ENCODE measurements at regions of chr10 and their contacts with region 1.

Region 1: DNA sequence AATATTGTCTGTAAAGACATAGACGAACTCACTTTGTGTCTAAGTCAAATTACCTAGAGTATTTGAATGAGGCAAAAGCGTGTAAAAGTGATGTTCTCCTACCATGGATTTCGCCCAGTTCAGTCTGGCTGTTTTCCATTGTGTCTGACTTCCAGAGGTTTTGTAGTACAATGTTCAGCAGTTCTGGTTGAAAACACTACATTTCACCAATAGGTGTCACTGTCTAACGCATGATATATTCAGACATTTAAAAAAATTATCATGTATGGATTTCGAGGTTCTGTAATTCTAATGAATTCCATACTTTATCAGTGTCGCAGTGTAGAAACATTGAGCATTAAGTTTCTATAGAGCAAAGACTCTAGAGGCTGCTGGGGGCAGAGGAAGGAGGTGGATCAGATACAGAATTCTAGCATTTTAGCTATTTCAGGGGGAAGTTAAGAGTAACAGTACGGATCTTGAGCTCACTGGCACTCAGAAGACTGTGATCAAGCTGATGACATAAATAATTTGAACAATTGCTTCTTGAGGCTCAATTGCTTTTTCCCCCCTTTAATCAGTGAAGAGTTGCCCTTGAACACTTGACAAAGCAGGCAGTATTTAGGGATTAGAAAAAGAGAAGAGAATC is 196.9 kb upstream of the RHOBTB1 start:
- DNase-seq: peak; percentile 51
- H3K4me3 ChIP-seq: no peak overlapping the region
- H3K27ac ChIP-seq: no peak overlapping the region
- H3K27me3 ChIP-seq: no peaks in the 10 kb centered on the region
- CTCF ChIP-seq: peak; percentile 74

Region 2: DNA sequence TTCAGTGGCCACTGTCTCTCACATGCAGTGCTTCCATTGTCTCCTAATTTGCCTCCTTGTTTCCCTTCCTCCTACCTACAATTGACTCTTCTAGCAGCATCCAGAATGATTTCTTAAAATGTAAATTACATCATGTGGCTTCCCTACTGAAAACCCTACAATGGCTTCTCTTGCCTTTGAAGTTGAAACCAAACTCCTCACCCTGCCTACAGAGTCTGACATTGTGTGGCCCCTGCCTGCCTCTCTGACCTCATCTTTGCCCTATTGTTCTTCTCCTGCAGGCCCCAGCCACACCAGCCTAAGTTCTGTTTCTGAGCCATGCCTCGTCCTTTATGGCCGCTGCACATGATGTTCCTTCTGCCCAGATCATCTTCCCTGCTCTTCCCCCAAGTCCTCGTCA is 398.4 kb before region 1 on chr10:
- CTCF ChIA-PET with region 1: no interaction called
- POLR2A ChIA-PET with region 1: no interaction called
- DNase-seq: no peak
- H3K4me3 ChIP-seq: no peak overlapping the region
- H3K27ac ChIP-seq: no peak overlapping the region
- H3K27me3 ChIP-seq: peaks cover 8% of the 10 kb centered on the region
- CTCF ChIP-seq: no peak

Region 3: DNA sequence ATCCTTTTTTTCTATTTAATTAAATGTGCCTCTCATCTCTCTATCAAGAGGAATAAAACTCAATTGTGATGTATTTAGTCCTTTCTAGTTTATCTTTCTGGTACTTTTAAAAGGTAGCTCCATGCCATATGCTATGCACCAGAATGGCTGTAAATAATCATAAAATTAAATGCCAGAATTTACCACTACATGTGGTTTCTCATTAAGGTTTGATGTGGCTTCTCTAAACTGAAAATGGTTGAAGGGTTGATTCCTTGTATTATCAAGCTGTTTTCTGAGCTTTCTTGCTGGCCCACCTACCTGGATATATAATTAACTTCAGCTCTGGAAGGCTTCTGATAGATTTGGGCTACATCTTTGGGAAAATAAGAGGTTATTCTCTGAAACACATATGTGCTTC is 25.0 kb before region 1 on chr10:
- CTCF ChIA-PET with region 1: interaction called, 11 read pairs
- POLR2A ChIA-PET with region 1: no interaction called
- DNase-seq: no peak
- H3K4me3 ChIP-seq: no peak overlapping the region
- H3K27ac ChIP-seq: no peak overlapping the region
- H3K27me3 ChIP-seq: no peaks in the 10 kb centered on the region
- CTCF ChIP-seq: no peak

Region 4: GRCh38 chr10:61151059-61151458 is 10.2 kb after region 1 on chr10:
- CTCF ChIA-PET with region 1: interaction called, 24 read pairs
- POLR2A ChIA-PET with region 1: no interaction called
- DNase-seq: no peak
- H3K4me3 ChIP-seq: no peak overlapping the region
- H3K27ac ChIP-seq: no peak overlapping the region
- H3K27me3 ChIP-seq: no peaks in the 10 kb centered on the region
- CTCF ChIP-seq: no peak

Region 5: DNA sequence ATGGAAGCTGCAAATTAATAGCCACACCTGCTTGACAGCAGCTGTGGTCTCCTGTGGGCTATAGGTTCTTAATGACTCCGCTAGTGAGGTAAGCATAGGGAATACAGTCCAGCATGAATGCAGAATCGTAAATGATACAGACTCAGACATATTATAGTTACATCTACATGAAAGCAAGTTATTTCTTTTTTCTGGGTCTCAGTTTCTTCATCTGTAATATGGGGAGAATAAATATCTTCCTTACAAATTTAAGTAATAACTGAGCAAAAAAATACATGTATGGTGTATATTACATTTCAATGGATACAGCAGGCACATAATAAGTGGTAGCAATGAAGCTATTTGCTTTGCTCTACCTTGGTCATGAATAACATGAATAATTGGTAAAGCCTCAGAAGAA is 49.0 kb after region 1 on chr10:
- CTCF ChIA-PET with region 1: interaction called, 21 read pairs
- POLR2A ChIA-PET with region 1: no interaction called
- DNase-seq: no peak
- H3K4me3 ChIP-seq: no peak overlapping the region
- H3K27ac ChIP-seq: no peak overlapping the region
- H3K27me3 ChIP-seq: no peaks in the 10 kb centered on the region
- CTCF ChIP-seq: no peak

Measured in AG04450 (cell line).